ENCODE measurements at regions of chr1 and their contacts with region 1.

Region 1: GRCh38 chr1:200154069-200154767 is 126.7 kb downstream of the NR5A2 start:
- DNase-seq: peak; percentile 78
- ATAC-seq: peak; percentile 88
- H3K4me3 ChIP-seq: peak overlapping the region in 2 of 5 experiments; percentile 18 to 50
- H3K4me3 Mint-ChIP-seq: peak overlapping the region; percentile 80
- H3K27ac ChIP-seq: peak overlapping the region; percentile 78 to 98
- H3K27ac Mint-ChIP-seq: peak overlapping the region; percentile 93
- H3K4me1 ChIP-seq: peaks cover 40 to 52% of the 10 kb centered on the region in 2 donors
- H3K4me1 Mint-ChIP-seq: peaks cover 59% of the 10 kb centered on the region
- H3K27me3 ChIP-seq: no peaks in the 10 kb centered on the region
- H3K27me3 Mint-ChIP-seq: no peaks in the 10 kb centered on the region
- CTCF ChIP-seq: no peak

Region 2: DNA sequence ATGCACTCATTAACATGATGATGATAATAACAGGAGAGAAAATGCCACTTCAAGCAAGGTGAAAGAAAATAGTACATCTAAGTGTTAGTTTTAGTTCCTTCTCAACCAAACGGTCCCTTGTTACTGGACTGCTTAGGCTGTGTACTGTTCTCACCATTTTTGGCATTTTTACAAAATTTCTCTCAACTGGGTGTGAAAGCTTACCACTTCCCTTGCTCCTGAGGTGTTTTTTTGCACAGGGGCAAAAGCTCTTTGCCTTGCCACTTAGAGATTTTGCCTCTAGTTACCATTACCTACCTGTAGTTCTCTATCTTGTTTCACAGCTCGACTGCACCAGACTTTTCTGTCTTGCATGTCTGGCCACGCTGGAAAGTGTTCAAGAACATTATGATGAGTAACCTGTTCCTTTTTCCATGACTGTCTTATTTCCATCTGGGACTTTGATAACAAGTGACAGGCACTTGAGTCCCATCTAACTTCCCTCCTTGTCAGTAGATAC is 1986.7 kb before region 1 on chr1:
- CTCF ChIA-PET with region 1: no interaction called
- POLR2A ChIA-PET with region 1: no interaction called
- intact Hi-C with region 1: loop called (anchors 10 kb)
- DNase-seq: peak; percentile 50
- ATAC-seq: peak; percentile 59
- H3K4me3 ChIP-seq: no peak overlapping the region
- H3K4me3 Mint-ChIP-seq: peak overlapping the region; percentile 74
- H3K27ac ChIP-seq: peak overlapping the region; percentile 37 to 46
- H3K27ac Mint-ChIP-seq: peak overlapping the region; percentile 81
- H3K4me1 ChIP-seq: peaks cover 46 to 50% of the 10 kb centered on the region in 2 donors
- H3K4me1 Mint-ChIP-seq: peaks cover 65% of the 10 kb centered on the region
- H3K27me3 ChIP-seq: no peaks in the 10 kb centered on the region
- H3K27me3 Mint-ChIP-seq: no peaks in the 10 kb centered on the region
- CTCF ChIP-seq: no peak

Region 3: GRCh38 chr1:200409761-200410565 is 255.7 kb after region 1 on chr1 and contains the start of gene ZNF281:
- CTCF ChIA-PET with region 1: no interaction called
- POLR2A ChIA-PET with region 1: no interaction called
- intact Hi-C with region 1: loop called (anchors 5 kb)
- DNase-seq: peak; percentile 94
- ATAC-seq: peak; percentile 96
- H3K4me3 ChIP-seq: peak within 1 kb of the TSS; percentile 85 to 97 (median 91)
- H3K4me3 Mint-ChIP-seq: peak within 1 kb of the TSS; percentile 98
- H3K27ac ChIP-seq: peak within 1 kb of the TSS; percentile 64 to 88
- H3K27ac Mint-ChIP-seq: peak within 1 kb of the TSS; percentile 99
- H3K4me1 ChIP-seq: peaks cover 37 to 39% of the 10 kb centered on the region in 2 donors
- H3K4me1 Mint-ChIP-seq: peaks cover 47% of the 10 kb centered on the region
- H3K27me3 ChIP-seq: no peaks in the 10 kb centered on the region
- H3K27me3 Mint-ChIP-seq: no peaks in the 10 kb centered on the region
- CTCF ChIP-seq: no peak
- total RNA-seq, gene ZNF281: 23.3 and 23.5 TPM in 2 replicates

Measured in B cell (primary cell).